Activated T-helper 2 cell treated with anti-CD3 and anti-CD28 coated beads, Interferon-gamma antibody, Interleukin-2, Interleukin-4, amounts not matched to agents 10 μg/mL and 5 μg/mL and 100 μg/mL, durations not matched to agents 14 hours and 24 hours and 36 hours (primary cell): ENCODE measurements at regions of chr12 and their contacts with region 1.

Region 1: GRCh38 chr12:92078167-92079053 is 67.2 kb downstream of the BTG1 start:
- DNase-seq: no peak
- H3K4me3 Mint-ChIP-seq: no peak overlapping the region
- H3K27ac Mint-ChIP-seq: peak overlapping the region; percentile 76
- H3K4me1 Mint-ChIP-seq: peaks cover 50% of the 10 kb centered on the region
- H3K27me3 Mint-ChIP-seq: no peaks in the 10 kb centered on the region

Region 2: DNA sequence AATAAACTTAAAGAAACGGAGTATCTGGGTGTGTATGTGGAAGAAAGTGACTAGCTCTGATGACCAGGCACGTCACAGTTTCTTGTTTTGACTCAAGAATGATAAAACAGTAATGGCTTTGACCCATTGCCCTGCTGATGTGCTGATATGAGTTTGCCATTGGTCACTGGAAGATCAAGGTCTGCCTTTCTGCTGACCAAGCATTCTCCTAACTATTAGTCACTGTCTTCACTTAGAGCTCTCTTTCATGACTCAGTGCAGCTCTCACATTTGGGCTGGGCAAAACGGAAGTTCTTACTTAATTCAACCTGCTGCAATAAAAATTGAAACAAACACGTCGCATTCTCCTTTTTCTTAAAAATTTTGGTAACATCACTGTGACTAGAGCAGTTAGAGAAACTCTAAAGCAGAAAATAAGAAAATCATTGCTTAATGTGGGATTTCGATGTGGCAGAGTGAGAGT is 299.4 kb before region 1 on chr12:
- intact Hi-C with region 1: loop called (anchors 5 kb)
- DNase-seq: peak; percentile 17
- H3K4me3 Mint-ChIP-seq: peak overlapping the region; percentile 62
- H3K27ac Mint-ChIP-seq: peak overlapping the region; percentile 70
- H3K4me1 Mint-ChIP-seq: peaks cover 24% of the 10 kb centered on the region
- H3K27me3 Mint-ChIP-seq: peaks cover 4% of the 10 kb centered on the region

Region 3: GRCh38 chr12:92041742-92042141 is 36.7 kb before region 1 on chr12:
- intact Hi-C with region 1: loop called (anchors 1 kb)
- DNase-seq: no peak
- H3K4me3 Mint-ChIP-seq: no peak overlapping the region
- H3K27ac Mint-ChIP-seq: no peak overlapping the region
- H3K4me1 Mint-ChIP-seq: peaks cover 68% of the 10 kb centered on the region
- H3K27me3 Mint-ChIP-seq: no peaks in the 10 kb centered on the region

Region 4: DNA sequence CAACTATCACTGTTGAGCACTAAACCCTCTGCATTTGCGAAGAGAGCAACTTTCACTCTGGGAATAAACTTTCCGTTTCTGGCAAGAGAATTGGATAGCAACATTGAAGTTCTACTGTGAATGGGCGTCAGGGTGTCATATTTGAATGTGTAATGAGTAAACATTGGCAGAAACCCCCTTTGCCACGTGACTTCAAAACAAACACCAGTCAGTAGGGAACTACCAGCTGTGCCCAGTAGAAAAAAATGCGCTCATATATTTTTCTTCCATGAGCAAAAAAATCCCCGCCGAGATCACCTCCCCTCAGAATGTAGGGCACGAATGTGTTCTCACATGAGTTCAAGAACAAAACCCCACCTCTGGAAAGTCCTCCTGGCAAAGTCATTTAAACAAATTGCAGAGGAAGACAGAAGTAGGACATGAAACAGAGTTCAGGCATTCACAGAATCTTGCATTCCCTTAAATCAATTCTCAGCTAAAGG is 13.4 kb before region 1 on chr12:
- intact Hi-C with region 1: loop called (anchors 1 kb)
- DNase-seq: no peak
- H3K4me3 Mint-ChIP-seq: no peak overlapping the region
- H3K27ac Mint-ChIP-seq: peak overlapping the region; percentile 54
- H3K4me1 Mint-ChIP-seq: peaks cover 45% of the 10 kb centered on the region
- H3K27me3 Mint-ChIP-seq: no peaks in the 10 kb centered on the region

Region 5: DNA sequence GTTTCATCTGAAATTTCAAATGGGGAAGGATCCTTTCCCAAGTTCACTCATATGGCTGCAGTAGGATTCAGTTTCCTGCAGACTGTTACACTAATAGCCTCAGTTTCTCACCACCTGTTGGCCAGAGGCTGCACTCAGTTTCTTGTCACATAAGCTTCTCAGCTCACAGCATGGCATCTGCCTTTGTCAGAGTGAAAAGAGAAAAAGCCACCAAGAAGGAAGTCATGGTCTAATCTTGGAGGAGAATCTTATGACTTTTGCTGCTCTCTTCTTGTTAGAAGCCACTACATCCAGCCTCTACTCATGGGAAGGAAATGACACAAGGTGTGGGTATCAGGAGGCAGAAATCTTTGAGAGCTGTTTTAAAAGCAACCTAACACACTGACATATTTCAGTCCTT is 106.6 kb after region 1 on chr12:
- intact Hi-C with region 1: loop called (anchors 5 kb)
- DNase-seq: peak; percentile 41
- H3K4me3 Mint-ChIP-seq: no peak overlapping the region
- H3K27ac Mint-ChIP-seq: peak overlapping the region; percentile 44
- H3K4me1 Mint-ChIP-seq: peaks cover 56% of the 10 kb centered on the region
- H3K27me3 Mint-ChIP-seq: peaks cover 2% of the 10 kb centered on the region